ENCODE measurements at regions of chr4 and their contacts with region 1.

Region 1: GRCh38 chr4:149370785-149371420 is 444.7 kb downstream of the IQCM start:
- DNase-seq: peak; percentile 79
- H3K4me3 ChIP-seq: no peak overlapping the region
- H3K27ac ChIP-seq: no peak overlapping the region
- H3K4me1 ChIP-seq: no peaks in the 10 kb centered on the region
- H3K27me3 ChIP-seq: no peaks in the 10 kb centered on the region

Region 2: DNA sequence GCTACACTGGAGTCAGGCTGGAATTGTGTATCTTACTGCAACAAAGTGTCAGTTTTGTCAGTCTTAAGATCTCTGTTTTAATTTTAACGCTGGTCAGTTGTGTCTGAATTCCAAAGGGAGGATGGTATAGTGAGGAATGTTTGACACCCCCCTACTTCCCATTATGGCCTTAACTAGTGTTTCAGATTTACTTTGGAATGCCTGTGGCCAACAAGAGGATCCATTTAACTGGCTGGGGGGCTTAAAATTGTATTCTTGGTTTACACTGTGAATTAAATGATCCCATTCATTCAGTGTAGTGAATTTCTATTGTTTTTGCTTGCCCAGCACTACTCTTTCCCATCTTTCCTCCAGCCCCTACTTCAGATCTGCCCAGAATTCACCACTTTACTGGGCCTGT is 520.5 kb after region 1 on chr4:
- in situ Hi-C with region 1: loop called (anchors 5 kb)
- DNase-seq: no peak
- H3K4me3 ChIP-seq: no peak overlapping the region
- H3K27ac ChIP-seq: no peak overlapping the region
- H3K4me1 ChIP-seq: peaks cover 20% of the 10 kb centered on the region
- H3K27me3 ChIP-seq: no peaks in the 10 kb centered on the region